K562 (cell line): ENCODE measurements at regions of chr14 and their contacts with region 1.

Region 1: GRCh38 chr14:69398053-69398817 is at the starts of genes ERH and SLC39A9:
- DNase-seq: peak; percentile 75 to 94 (median 84)
- ATAC-seq: peak; percentile 87
- H3K4me3 ChIP-seq: peak within 1 kb of the TSS; percentile 81
- H3K27ac ChIP-seq: peak within 1 kb of the TSS; percentile 95
- H3K4me1 ChIP-seq: peaks cover 0 to 10% of the 10 kb centered on the region in 2 experiments; a peak in 4 of 5 replicates
- H3K27me3 ChIP-seq: no peaks in the 10 kb centered on the region
- CTCF ChIP-seq: 0 out of 6 replicates have a peak, but pooled peaks of 1 of the 3 experiments have one; percentile 12
- EP300 ChIP-seq: peak; percentile 46
- POLR2A ChIP-seq: peak; percentile 85
- RAD21 ChIP-seq: no peak
- polyA plus RNA-seq, gene ERH: 292 to 474 TPM
- polyA plus RNA-seq, gene SLC39A9: 18.4 to 24.0 TPM

Region 2: GRCh38 chr14:69387311-69387710 is 10.9 kb before region 1 on chr14:
- CTCF ChIA-PET with region 1: no interaction called
- POLR2A ChIA-PET with region 1: interaction called, 15 read pairs
- in situ Hi-C with region 1: no loop called
- intact Hi-C with region 1: no loop called
- DNase-seq: no peak
- ATAC-seq: no peak
- H3K4me3 ChIP-seq: no peak overlapping the region
- H3K27ac ChIP-seq: no peak overlapping the region
- H3K4me1 ChIP-seq: no peaks in the 10 kb centered on the region
- H3K27me3 ChIP-seq: no peaks in the 10 kb centered on the region
- CTCF ChIP-seq: no peak
- EP300 ChIP-seq: no peak
- POLR2A ChIP-seq: no peak
- RAD21 ChIP-seq: no peak

Region 3: DNA sequence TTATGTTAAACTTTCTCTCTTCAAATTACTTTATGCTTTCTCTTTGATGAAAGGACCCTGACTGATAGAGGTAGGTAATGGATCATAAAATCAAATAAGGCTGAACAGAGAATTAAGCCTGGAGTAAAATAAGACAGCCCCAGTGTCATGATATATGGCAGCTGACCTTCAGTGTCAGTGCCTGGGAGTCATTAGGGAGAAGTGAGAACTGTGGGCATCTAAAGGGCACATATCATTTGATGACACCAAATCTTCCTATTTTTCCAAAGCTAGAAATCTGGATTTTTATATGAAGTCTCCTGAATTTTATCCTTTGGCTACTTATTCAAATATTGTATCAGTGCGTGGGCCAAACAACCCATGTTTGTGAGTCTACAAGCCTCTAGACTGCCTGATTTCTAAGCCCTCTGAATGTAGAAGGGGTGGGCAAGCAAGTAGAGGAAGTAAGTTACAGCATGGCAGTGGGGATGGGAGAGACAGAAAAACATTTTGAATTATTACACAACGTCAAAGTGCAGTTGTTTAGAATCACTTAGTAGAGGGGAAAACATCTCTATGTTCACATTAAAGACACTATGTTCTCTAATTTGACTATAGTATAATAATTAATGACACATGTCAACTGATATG is 10.2 kb after region 1 on chr14:
- CTCF ChIA-PET with region 1: no interaction called
- POLR2A ChIA-PET with region 1: interaction called, 13 read pairs
- in situ Hi-C with region 1: no loop called
- intact Hi-C with region 1: no loop called
- DNase-seq: no peak
- ATAC-seq: no peak
- H3K4me3 ChIP-seq: no peak overlapping the region
- H3K27ac ChIP-seq: no peak overlapping the region
- H3K4me1 ChIP-seq: no peaks in the 10 kb centered on the region; a peak in 3 of 5 replicates
- H3K27me3 ChIP-seq: no peaks in the 10 kb centered on the region
- CTCF ChIP-seq: no peak
- EP300 ChIP-seq: no peak
- POLR2A ChIP-seq: no peak
- RAD21 ChIP-seq: no peak

Region 4: DNA sequence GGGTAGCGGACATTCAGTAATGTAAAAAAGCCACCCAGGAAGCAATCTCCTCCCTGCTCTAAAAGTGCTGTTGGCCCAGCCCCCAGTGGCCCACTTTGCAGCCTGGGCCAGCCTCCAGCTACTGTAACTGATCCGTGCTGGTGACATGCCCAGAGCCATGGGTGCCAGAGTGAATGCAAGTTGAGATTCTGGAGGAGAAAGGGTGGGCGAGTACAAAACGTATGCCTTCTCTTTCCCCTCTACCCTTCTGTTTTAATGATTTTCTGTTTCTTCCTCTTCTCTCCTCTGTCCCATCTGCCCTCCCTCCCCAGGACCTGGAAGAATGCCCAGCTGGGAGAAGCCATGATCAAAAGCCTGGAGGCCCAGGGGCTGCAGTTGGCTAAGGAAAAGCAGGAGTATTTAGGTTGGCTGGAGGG is 103.2 kb after region 1 on chr14:
- CTCF ChIA-PET with region 1: no interaction called
- POLR2A ChIA-PET with region 1: no interaction called
- in situ Hi-C with region 1: no loop called
- intact Hi-C with region 1: no loop called
- DNase-seq: no peak
- ATAC-seq: no peak
- H3K4me3 ChIP-seq: no peak overlapping the region
- H3K27ac ChIP-seq: no peak overlapping the region
- H3K4me1 ChIP-seq: no peaks in the 10 kb centered on the region
- H3K27me3 ChIP-seq: peaks cover 0 to 26% of the 10 kb centered on the region in 2 experiments; a peak in 2 of 5 replicates
- CTCF ChIP-seq: no peak
- EP300 ChIP-seq: no peak
- POLR2A ChIP-seq: no peak
- RAD21 ChIP-seq: no peak